ENCODE measurements at regions of chr3 and their contacts with region 1.

Region 1: GRCh38 chr3:99645277-99646106 is 7.1 kb downstream of the COL8A1 start:
- DNase-seq: peak in 1 of 5 donors; percentile 15
- ATAC-seq: peak in 2 of 4 donors; percentile 30 to 38
- H3K4me3 ChIP-seq: peak overlapping the region in 2 of 12 donors; percentile 0
- H3K27ac ChIP-seq: peak overlapping the region in 9 of 12 donors; percentile 3 to 74 (median 61)
- H3K4me1 ChIP-seq: peaks cover 0 to 44% (median 7%) of the 10 kb centered on the region in 12 donors
- H3K27me3 ChIP-seq: peaks cover 0 to 4% (median 0%) of the 10 kb centered on the region in 9 donors
- CTCF ChIP-seq: peak; percentile 24 to 70 (median 50)
- POLR2A ChIP-seq: no peak

Region 2: DNA sequence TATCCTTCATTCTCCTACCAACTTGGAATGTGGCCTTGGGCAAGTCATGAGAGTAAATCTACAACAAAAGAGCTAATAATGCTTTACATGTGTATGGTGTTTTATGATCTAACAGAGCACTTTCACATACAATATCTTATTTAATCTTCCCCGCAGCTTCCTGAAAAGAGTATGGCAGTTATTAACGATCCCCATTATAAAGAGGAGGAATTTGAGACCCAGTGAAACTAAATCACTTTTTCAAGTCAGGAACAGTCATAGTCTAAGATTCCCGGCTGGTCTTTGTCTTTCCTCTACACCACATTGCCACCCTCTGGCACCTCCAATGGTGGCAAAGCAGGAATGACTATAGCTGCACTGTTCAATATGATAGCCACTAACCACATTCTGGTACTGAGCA is 102.4 kb after region 1 on chr3:
- intact Hi-C with region 1: loop called in 7 of 10 experiments (anchors 2 to 10 kb)
- DNase-seq: no peak
- ATAC-seq: peak in 3 of 4 donors; percentile 45 to 69 (median 51)
- H3K4me3 ChIP-seq: no peak overlapping the region
- H3K27ac ChIP-seq: no peak overlapping the region
- H3K4me1 ChIP-seq: peaks cover 0 to 6% (median 0%) of the 10 kb centered on the region in 12 donors
- H3K27me3 ChIP-seq: no peaks in the 10 kb centered on the region
- CTCF ChIP-seq: peak in 8 of 12 donors; percentile 11 to 37 (median 25)
- POLR2A ChIP-seq: no peak

Region 3: GRCh38 chr3:99753268-99753975 is 107.9 kb after region 1 on chr3:
- intact Hi-C with region 1: loop called in 7 of 10 experiments (anchors 2 to 10 kb)
- DNase-seq: peak in 2 of 5 donors; percentile 15 to 27
- ATAC-seq: peak; percentile 69 to 86 (median 77)
- H3K4me3 ChIP-seq: no peak overlapping the region
- H3K27ac ChIP-seq: no peak overlapping the region
- H3K4me1 ChIP-seq: peaks cover 0 to 20% (median 1%) of the 10 kb centered on the region in 12 donors
- H3K27me3 ChIP-seq: no peaks in the 10 kb centered on the region
- CTCF ChIP-seq: peak; percentile 57 to 82 (median 71)
- POLR2A ChIP-seq: no peak